ENCODE measurements at regions of chr2 and their contacts with region 1.

Region 1: GRCh38 chr2:232789082-232789481 is 12.7 kb upstream of the KCNJ13 start:
- DNase-seq: no peak
- H3K4me3 ChIP-seq: no peak overlapping the region
- H3K27ac ChIP-seq: no peak overlapping the region
- H3K4me1 ChIP-seq: no peaks in the 10 kb centered on the region
- H3K27me3 ChIP-seq: no peaks in the 10 kb centered on the region
- CTCF ChIP-seq: no peak

Region 2: DNA sequence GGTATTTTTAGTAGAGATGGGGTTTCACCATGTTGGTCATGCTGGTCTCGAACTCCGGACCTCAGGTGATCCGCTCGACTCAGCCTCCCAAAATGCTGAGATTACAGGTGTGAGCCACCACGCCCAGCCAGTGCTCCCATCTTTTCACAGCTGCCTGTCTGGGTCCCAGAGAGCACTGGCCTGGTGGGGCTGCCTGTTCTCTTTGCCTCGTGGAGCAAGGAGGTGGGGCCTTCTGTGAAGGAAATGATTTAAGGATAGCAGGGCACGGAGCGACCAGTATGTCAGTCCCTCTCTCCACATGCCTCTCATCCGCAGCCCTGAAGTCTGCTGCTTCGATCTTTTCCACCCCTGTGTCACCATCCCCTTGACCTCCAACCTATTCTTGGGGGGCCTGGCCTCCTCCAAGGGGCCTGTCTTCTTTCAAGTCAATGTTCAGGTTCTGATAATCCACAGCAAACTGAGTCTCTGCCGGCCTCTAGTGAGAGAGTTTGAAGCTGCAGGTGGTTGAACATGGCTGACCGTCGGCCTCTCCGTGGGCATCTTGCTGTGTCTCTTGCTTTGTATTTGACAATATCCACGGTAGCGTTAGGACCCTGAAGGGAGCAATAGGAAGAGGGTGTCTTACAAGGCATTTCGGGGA is 120.2 kb before region 1 on chr2:
- dilution Hi-C with region 1: no loop called
- DNase-seq: no peak
- H3K4me3 ChIP-seq: no peak overlapping the region
- H3K27ac ChIP-seq: no peak overlapping the region
- H3K4me1 ChIP-seq: no peaks in the 10 kb centered on the region
- H3K27me3 ChIP-seq: no peaks in the 10 kb centered on the region
- CTCF ChIP-seq: peak in 2 of 3 experiments; percentile 34 to 37

Region 3: DNA sequence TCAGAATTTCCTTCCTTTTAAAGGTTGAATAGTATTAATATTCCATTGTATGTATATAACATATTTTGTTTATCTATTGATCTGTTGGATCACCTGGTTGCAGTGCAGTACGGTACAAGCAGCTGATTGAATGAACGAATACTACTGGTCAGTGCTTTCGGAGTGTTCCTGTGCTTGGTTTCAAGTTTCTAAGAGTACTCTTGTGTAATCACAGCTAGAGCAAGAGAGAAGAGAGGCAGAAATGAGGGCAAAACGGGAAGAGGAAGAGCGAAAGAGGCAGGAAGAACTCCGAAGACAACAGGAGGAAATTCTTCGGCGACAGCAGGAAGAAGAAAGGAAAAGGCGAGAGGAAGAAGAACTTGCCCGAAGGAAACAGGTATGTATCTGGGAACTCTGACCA is 27.6 kb after region 1 on chr2:
- dilution Hi-C with region 1: loop called (anchors 5 kb)
- DNase-seq: no peak
- H3K4me3 ChIP-seq: no peak overlapping the region
- H3K27ac ChIP-seq: no peak overlapping the region
- H3K4me1 ChIP-seq: no peaks in the 10 kb centered on the region
- H3K27me3 ChIP-seq: no peaks in the 10 kb centered on the region
- CTCF ChIP-seq: no peak